A549 (cell line): ENCODE measurements at regions of chr16 and their contacts with region 1.

Region 1: DNA sequence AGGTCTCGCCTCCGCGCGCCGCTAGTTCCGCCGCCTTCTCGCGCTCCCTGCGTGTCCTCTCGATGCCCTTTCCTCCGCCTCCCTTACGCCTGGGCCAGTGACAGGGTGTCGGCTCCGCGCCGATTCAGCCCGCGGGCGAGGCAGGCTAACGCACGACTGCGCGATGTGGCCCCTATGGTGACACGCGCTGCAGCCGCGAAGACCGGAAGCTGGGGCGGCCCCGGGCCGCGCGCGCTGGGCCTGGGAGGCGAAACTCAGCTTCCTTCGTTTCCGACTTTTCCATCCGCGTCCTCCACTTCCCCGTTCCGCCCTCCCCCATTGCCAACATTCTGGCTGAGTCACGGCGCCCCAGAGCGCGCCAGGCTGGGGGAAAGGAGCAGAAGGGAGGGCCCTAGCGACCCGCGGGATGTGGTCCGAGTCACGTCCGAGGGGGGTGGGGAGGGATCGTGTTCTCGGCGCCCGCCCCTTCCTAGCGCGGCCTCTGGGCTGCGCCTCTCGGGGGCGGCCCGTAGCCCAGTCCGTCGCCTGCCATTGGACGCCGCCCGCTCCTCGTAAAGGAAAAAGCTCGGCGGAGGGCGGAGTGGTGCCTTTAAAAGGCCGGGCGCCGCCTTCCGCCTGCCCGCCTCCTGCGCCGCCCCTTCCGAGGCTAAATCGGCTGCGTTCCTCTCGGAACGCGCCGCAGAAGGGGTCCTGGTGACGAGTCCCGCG is at the start of gene ALDOA:
- DNase-seq: peak; percentile 86 to 98
- ATAC-seq: peak; percentile 78 to 89
- H3K4me3 ChIP-seq: peak within 1 kb of the TSS; percentile 73
- H3K27ac ChIP-seq: peak within 1 kb of the TSS; percentile 96 to 97
- H3K4me1 ChIP-seq: peaks cover 34% of the 10 kb centered on the region
- CTCF ChIP-seq: no peak
- EP300 ChIP-seq: 0 out of 5 replicates have a peak, but pooled peaks of 1 of the 2 experiments have one; percentile 13
- POLR2A ChIP-seq: peak; percentile 95
- RAD21 ChIP-seq: no peak
- polyA plus RNA-seq, gene ALDOA: 741 and 761 TPM in 2 replicates

Region 2: DNA sequence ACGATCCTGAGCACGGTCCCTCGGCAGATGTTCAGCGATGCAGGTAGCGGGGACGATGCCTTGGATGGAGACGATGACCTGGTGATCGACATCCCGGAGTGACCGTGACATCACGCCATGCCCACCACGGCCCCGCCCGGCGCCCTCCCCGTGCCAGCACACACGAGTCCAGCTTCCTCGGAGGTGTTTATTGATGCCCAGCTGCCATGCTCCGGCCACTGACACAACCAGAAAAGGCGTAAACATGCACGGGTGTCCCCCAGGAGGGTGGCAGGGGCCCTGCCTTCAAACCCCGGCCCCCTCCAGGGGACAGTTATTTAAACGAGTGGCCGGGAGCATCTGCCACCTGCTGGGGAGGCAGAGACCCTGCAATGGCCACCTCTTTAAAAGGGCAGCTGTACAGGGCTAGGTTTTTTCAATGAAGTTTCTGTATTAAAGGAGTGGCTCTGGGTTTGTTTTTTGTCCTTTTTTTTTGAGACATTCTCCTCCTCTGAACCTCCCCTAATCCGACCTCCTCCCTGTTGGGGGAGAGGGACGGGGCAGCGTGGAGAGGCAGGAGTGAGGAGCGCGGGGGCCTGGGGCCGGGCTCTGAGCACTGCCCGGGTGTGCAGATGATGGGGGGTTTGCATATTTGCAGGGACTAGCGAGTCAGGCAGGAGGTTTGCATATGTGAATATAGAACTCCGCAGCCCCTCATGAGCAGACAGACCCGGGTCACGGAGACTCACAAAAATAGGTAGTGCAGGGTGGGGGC is 59.8 kb before region 1 on chr16:
- CTCF ChIA-PET with region 1: no interaction called
- POLR2A ChIA-PET with region 1: no interaction called
- DNase-seq: peak; percentile 59 to 90
- ATAC-seq: peak; percentile 54 to 78; a peak in 5 of 6 replicates
- H3K4me3 ChIP-seq: no peak overlapping the region
- H3K27ac ChIP-seq: peak overlapping the region in 1 of 2 experiments; percentile 38; a peak in 3 of 6 replicates
- H3K4me1 ChIP-seq: peaks cover 10% of the 10 kb centered on the region; the same call in 2 of the 3 replicates
- CTCF ChIP-seq: peak; percentile 78
- EP300 ChIP-seq: no peak
- POLR2A ChIP-seq: no peak
- RAD21 ChIP-seq: peak; percentile 64 to 71

Region 3: DNA sequence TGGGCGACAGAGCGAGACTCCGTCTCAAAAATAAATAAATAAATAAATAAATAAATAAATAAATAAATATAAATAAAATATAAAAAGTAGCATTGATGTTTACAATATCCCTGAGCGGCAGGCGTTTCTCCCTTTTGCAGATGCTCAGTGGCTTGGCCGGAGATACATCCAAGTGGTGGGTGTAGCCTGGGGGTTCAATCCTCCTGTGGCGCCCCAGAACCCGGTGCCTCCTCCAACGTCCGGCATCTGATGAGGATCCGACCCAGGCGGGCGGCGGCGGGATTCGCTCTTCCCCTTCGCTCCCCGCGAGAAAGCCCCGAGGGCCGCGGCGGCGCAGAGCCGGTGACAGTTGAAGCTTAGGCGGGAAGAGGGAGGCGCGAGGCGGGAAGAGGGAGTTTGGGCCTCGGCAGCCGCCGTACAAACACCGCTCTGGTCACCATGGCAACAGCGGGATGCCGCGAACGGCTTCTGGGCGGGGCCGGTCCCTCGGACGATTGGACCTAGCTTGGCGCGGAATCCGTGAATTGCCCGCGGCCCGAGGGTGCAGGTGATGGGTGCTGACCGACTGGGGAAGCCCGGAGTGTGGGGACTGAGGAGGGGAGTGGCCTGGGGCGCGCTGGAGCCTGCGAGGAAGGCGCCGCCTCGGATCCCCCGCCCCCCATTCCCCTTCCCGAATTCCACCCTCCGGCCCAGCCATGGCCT is 12.5 kb before region 1 on chr16:
- CTCF ChIA-PET with region 1: interaction called, 44 read pairs
- POLR2A ChIA-PET with region 1: interaction called, 51 read pairs
- DNase-seq: peak; percentile 94
- ATAC-seq: peak; percentile 74 to 81
- H3K4me3 ChIP-seq: peak overlapping the region; percentile 81
- H3K27ac ChIP-seq: peak overlapping the region; percentile 69 to 88
- H3K4me1 ChIP-seq: peaks cover 22% of the 10 kb centered on the region
- CTCF ChIP-seq: no peak
- EP300 ChIP-seq: no peak
- POLR2A ChIP-seq: no peak
- RAD21 ChIP-seq: no peak

Region 4: GRCh38 chr16:30075507-30076275 is 10.4 kb after region 1 on chr16 and contains the start of gene PPP4C:
- CTCF ChIA-PET with region 1: interaction called, 46 read pairs
- POLR2A ChIA-PET with region 1: interaction called, 14 read pairs
- DNase-seq: peak; percentile 91 to 98
- ATAC-seq: peak; percentile 93 to 98
- H3K4me3 ChIP-seq: peak within 1 kb of the TSS; percentile 100
- H3K27ac ChIP-seq: peak within 1 kb of the TSS; percentile 97 to 98
- H3K4me1 ChIP-seq: peaks cover 18% of the 10 kb centered on the region
- CTCF ChIP-seq: no peak
- EP300 ChIP-seq: no peak
- POLR2A ChIP-seq: peak; percentile 83
- RAD21 ChIP-seq: no peak
- polyA plus RNA-seq, gene PPP4C: 102 and 117 TPM in 2 replicates

Region 5: GRCh38 chr16:30082545-30083090 is 17.3 kb after region 1 on chr16:
- CTCF ChIA-PET with region 1: interaction called, 119 read pairs
- POLR2A ChIA-PET with region 1: interaction called, 6 read pairs
- DNase-seq: no peak
- ATAC-seq: peak; percentile 22 to 31; a peak in 2 of 6 replicates
- H3K4me3 ChIP-seq: no peak overlapping the region
- H3K27ac ChIP-seq: no peak overlapping the region
- H3K4me1 ChIP-seq: peaks cover 13% of the 10 kb centered on the region
- CTCF ChIP-seq: no peak; the same call in 1 of the 3 replicates
- EP300 ChIP-seq: no peak
- POLR2A ChIP-seq: no peak
- RAD21 ChIP-seq: no peak